ENCODE measurements at regions of chr20 and their contacts with region 1.

Region 1: DNA sequence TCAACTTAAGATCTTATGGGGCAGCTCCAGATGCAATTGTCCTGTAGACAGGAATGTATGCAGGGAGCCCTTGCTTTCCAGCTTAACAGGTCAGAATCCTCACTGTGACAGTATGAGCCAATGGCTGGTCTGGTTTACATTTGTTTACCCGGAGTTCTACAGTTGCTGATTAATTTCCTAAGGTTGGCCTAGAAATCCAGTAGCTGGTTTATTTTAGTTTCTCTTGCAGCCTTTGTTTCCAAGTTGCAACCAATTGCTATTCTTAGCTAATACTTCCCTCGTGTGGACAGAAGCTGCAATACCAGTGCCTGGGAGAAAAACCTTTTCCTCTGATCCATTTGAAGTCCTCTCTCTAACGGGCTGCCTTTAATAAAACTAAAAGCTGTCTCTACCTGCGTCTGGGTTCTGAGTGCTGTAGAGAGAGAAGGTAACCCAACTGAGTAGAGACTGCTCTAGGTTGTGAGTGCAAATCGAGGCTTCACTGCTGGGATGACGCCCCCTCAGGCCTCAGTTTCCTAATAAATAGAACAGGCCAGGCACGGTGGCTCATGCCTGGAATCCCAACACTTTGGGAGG is 45.9 kb downstream of the ZNF217 start:
- DNase-seq: peak; percentile 41
- H3K4me3 ChIP-seq: no peak overlapping the region
- H3K27ac ChIP-seq: no peak overlapping the region
- H3K4me1 ChIP-seq: no peaks in the 10 kb centered on the region
- H3K27me3 ChIP-seq: no peaks in the 10 kb centered on the region
- CTCF ChIP-seq: peak; percentile 85 to 87

Region 2: DNA sequence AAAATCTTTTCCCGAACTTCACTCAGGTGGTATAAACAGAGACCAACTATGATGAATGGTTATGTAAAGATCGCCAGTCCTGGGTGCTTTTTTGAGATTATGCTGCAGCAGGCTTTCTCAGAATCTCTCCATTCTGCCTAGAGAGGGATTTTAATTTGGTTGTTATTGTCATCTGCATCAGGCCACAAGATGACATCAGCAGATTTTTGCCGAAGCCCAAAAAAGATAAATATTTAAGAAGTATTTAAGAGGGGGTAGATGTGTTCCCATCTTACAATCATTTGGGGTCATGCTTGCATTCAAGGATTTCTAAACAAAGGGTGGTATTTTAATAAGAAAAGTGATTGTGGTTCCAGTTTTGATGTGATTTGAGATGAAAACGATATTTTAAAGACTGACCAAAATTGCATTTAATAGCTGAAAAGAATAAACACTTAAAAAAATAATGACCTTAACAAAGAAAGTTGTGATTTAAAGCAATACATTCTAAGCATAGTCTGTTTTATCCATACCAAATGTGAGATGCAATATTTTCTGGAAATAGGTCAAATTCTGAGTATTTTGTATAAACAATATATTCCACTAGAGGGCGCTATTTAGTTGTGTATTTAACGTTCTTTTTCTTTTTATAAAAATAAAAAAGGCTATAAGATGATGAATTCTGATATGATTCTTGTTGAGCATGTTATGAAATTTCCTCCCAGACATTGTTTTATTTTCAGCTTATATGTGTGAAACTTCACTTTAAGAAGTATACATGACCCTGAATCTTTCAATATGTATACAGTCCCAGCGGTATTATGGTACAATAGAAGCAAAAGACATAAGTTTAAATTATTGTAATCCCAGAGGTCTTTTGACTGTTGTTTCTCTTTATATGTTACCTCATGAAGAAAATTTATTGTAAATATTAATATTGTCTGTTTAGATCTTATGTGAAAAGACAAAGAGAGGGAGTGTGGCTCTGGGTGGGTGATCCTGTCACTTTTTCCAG is 1305.2 kb before region 1 on chr20:
- CTCF ChIA-PET with region 1: no interaction called
- dilution Hi-C with region 1: no loop called
- in situ Hi-C with region 1: no loop called
- intact Hi-C with region 1: loop called (anchors 5 kb)
- DNase-seq: no peak
- H3K4me3 ChIP-seq: no peak overlapping the region
- H3K27ac ChIP-seq: no peak overlapping the region
- H3K4me1 ChIP-seq: no peaks in the 10 kb centered on the region
- H3K27me3 ChIP-seq: no peaks in the 10 kb centered on the region
- CTCF ChIP-seq: peak; percentile 47 to 55

Region 3: DNA sequence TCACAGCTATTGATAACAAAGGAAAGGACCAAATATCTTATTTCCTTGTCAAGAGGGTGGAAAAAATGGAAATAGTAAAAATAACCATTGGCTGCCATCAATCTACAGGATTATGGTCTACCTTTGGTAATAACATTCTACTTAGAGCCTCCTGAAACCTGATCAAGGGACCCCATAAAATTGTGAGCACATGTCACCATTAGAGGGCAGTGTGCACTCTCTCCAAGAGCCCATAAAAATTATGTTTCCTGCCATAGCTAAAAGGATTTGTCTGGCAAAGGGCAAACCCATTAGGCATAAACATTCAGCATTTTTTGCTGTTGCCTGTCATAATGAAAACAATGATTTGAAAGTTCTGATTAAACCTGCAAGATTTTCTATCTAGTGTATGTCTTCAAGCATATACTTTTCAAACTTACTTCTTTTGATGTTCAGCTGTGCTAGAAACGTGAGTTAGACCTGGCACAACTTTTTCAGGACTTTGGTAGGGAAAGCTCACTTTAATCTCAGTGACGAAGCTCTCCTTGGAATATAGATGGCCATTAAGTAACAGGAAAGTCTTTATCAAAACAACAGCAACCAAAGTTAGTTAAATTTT is 1235.5 kb before region 1 on chr20:
- CTCF ChIA-PET with region 1: interaction called, 6 read pairs
- dilution Hi-C with region 1: no loop called
- in situ Hi-C with region 1: loop called (anchors 10 kb)
- intact Hi-C with region 1: loop called (anchors 1 kb)
- DNase-seq: peak; percentile 32
- H3K4me3 ChIP-seq: no peak overlapping the region
- H3K27ac ChIP-seq: no peak overlapping the region
- H3K4me1 ChIP-seq: no peaks in the 10 kb centered on the region
- H3K27me3 ChIP-seq: no peaks in the 10 kb centered on the region
- CTCF ChIP-seq: peak; percentile 73 to 80

Region 4: GRCh38 chr20:52747845-52748284 is 799.9 kb before region 1 on chr20:
- CTCF ChIA-PET with region 1: no interaction called
- dilution Hi-C with region 1: no loop called
- in situ Hi-C with region 1: loop called in 1 of 2 experiments (anchors 25 kb)
- intact Hi-C with region 1: no loop called
- DNase-seq: no peak
- H3K4me3 ChIP-seq: no peak overlapping the region
- H3K27ac ChIP-seq: no peak overlapping the region
- H3K4me1 ChIP-seq: peaks cover 3% of the 10 kb centered on the region
- H3K27me3 ChIP-seq: no peaks in the 10 kb centered on the region
- CTCF ChIP-seq: peak; percentile 30 to 69